WTC11 (cell line): ENCODE measurements at regions of chr19 and their contacts with region 1.

Region 1: DNA sequence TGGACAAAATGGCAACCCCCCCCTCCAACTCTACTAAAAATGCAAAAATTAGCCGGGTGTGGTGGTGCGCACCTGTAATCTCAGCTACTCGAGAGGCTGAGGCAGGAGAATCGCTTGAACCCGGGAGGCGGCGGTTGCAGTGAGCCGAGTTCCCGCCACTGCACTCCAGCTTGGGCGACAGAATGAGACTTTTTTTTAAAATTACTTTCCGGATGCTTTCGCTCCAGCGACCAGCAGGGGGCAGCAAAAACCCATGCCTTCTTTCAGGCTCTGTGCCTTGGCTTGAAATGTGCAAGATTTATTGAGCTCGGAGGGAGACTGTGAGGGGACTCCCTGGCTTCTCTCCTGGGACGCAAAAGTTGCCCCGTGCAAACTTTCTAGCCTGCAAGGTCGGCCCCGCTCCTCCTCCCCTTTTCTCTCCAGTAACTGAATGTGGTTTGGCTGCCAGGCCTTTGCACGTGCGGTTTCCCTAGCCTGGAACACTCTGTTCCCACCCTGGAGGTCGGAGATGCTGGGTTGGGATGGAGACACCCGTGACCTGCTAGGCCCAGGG is 61.4 kb upstream of the NFIC start:
- DNase-seq: peak; percentile 81
- ATAC-seq: peak; percentile 57
- H3K4me3 Mint-ChIP-seq: no peak overlapping the region
- H3K27ac Mint-ChIP-seq: no peak overlapping the region
- H3K4me1 Mint-ChIP-seq: no peaks in the 10 kb centered on the region
- H3K27me3 Mint-ChIP-seq: peaks cover 29% of the 10 kb centered on the region
- CTCF ChIP-seq: peak; percentile 76

Region 2: DNA sequence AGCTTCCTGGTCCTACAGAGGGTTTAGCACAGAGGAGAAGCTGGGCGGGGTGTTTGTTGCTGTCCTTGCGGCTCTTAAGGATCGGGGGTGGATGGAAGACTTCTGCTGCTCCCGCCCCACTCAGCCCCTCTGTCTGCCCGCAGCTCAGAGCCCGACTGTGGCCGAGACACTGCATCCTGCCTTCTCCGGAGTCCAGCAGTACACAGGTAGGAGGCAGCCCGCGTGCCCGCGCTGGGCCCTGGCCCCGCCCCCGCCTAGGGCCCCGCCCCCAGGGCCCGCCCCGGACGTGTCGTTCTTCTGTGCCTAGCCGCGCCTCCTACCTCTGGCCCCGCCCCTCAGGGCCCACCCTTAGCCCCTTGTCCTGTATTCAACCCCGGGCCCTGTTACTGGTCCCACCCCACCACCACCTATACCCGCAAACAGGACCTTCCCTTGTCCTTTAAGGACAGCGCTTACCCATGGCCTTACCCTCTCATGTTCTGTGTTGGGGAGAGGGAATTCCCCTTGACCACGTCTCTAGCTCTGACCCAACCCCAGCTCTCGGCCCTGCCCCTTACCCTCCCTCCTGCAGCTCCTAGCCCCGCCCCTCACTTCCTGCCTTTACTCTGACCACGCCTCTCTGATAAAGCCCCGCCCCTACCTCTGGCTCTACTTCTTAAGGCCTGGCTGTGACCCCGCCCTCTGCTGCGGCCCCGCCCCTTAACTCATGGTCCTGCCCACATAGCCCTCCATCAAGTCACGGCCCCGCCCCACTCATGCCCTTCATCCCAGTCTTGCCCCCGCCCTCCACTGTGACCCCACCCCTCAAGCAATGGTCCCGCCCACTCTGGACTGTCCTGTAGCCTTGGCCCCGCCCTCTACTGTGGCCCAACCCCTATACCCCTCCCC is 19.9 kb before region 1 on chr19:
- CTCF ChIA-PET with region 1: interaction called, 17 read pairs
- POLR2A ChIA-PET with region 1: interaction called, 8 read pairs
- DNase-seq: peak; percentile 100
- ATAC-seq: peak; percentile 84
- H3K4me3 Mint-ChIP-seq: peak overlapping the region; percentile 72
- H3K27ac Mint-ChIP-seq: peak overlapping the region; percentile 97
- H3K4me1 Mint-ChIP-seq: peaks cover 7% of the 10 kb centered on the region
- H3K27me3 Mint-ChIP-seq: peaks cover 11% of the 10 kb centered on the region
- CTCF ChIP-seq: no peak

Region 3: DNA sequence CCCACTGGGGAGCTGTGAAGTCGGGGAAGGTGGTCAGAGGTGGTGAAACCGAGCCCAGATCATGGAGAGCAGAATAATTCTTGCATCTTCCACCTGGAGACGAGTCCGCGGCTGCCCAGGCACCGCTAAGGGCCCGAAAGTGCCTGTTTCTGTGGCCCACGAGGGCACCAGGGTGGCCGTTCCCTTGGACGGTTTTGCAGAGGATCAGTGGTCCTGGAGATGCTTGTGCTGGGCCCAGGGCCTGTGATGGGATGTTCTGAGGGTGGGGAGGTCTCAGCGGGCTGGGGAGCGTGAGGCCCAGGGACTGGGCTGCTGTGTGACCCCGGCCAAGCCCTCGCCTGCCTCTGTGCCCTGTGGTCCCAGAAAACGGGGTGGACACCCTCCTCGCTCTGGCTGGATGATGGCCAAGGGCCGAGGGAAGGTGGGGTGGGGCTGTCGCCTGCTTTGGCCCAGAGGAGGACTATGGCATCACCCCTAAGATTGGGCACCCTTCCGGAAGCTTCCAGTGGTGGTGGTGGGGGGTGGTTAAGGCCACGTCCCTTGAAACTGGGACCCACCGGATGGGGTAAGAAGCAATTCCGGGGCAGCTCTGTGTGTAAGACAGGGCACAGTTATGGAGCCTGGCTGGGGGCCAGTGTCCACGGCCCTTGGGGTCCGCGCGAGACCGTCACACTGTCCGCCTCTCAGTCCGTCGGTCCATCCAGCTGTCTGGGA is 10.2 kb after region 1 on chr19:
- CTCF ChIA-PET with region 1: interaction called, 16 read pairs
- POLR2A ChIA-PET with region 1: no interaction called
- DNase-seq: no peak
- ATAC-seq: no peak
- H3K4me3 Mint-ChIP-seq: no peak overlapping the region
- H3K27ac Mint-ChIP-seq: no peak overlapping the region
- H3K4me1 Mint-ChIP-seq: no peaks in the 10 kb centered on the region
- H3K27me3 Mint-ChIP-seq: peaks cover 15% of the 10 kb centered on the region
- CTCF ChIP-seq: no peak

Region 4: GRCh38 chr19:3346677-3347353 is 41.9 kb after region 1 on chr19:
- CTCF ChIA-PET with region 1: interaction called, 11 read pairs
- POLR2A ChIA-PET with region 1: no interaction called
- DNase-seq: no peak
- ATAC-seq: no peak
- H3K4me3 Mint-ChIP-seq: no peak overlapping the region
- H3K27ac Mint-ChIP-seq: no peak overlapping the region
- H3K4me1 Mint-ChIP-seq: no peaks in the 10 kb centered on the region
- H3K27me3 Mint-ChIP-seq: peaks cover 41% of the 10 kb centered on the region
- CTCF ChIP-seq: no peak

Region 5: DNA sequence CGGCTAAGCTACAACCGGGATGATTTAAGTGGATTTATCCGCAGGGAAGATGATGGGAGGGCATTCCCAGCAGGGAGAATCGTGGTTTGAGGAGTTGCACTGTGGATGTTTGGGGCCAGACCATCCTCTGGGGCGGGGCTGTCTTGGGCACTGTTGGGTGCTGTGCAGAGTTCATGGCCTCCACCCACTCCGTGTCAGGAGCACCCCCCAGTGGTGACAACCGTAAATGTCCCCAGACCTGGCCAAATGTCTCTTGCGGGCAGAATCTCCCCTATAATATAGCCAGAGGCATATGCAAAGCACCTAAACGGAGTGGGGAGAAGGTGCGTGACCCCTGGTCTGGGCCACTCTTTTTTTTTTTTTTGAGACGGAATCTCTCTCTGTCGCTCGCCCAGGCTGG is 135.1 kb after region 1 on chr19:
- CTCF ChIA-PET with region 1: interaction called, 15 read pairs
- POLR2A ChIA-PET with region 1: interaction called, 5 read pairs
- DNase-seq: peak; percentile 87
- ATAC-seq: peak; percentile 71
- H3K4me3 Mint-ChIP-seq: no peak overlapping the region
- H3K27ac Mint-ChIP-seq: no peak overlapping the region
- H3K4me1 Mint-ChIP-seq: peaks cover 17% of the 10 kb centered on the region
- H3K27me3 Mint-ChIP-seq: no peaks in the 10 kb centered on the region
- CTCF ChIP-seq: peak; percentile 62

Region 6: GRCh38 chr19:3544742-3545668 is 240.1 kb after region 1 on chr19:
- CTCF ChIA-PET with region 1: interaction called, 10 read pairs
- POLR2A ChIA-PET with region 1: no interaction called
- DNase-seq: peak; percentile 93
- ATAC-seq: peak; percentile 85
- H3K4me3 Mint-ChIP-seq: no peak overlapping the region
- H3K27ac Mint-ChIP-seq: no peak overlapping the region
- H3K4me1 Mint-ChIP-seq: no peaks in the 10 kb centered on the region
- H3K27me3 Mint-ChIP-seq: no peaks in the 10 kb centered on the region
- CTCF ChIP-seq: peak; percentile 97